ENCODE measurements at regions of chr17 and their contacts with region 1.

Region 1: DNA sequence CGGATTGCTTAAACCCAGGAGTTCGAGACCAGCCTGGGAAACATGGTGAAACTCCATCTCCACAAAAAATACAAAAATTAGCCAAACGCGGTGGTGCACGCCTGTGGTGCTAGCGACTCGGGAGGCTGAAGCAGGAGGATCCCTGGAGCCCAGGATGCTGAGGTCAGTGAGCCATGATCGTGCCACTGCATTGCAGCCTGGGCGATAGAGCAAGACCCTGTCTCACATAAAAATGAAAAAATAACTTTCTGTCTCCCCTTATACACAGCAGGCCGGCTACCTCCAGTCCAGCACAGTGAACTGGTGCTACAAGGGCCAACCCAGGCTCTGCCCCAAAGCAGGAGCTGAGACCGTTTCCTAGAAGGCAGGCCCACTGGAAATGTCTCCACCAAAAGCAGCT is 59.7 kb downstream of the YWHAE start:
- DNase-seq: no peak
- H3K4me3 ChIP-seq: no peak overlapping the region
- H3K27ac ChIP-seq: no peak overlapping the region
- H3K4me1 ChIP-seq: no peaks in the 10 kb centered on the region
- H3K27me3 ChIP-seq: no peaks in the 10 kb centered on the region
- CTCF ChIP-seq: no peak

Region 2: DNA sequence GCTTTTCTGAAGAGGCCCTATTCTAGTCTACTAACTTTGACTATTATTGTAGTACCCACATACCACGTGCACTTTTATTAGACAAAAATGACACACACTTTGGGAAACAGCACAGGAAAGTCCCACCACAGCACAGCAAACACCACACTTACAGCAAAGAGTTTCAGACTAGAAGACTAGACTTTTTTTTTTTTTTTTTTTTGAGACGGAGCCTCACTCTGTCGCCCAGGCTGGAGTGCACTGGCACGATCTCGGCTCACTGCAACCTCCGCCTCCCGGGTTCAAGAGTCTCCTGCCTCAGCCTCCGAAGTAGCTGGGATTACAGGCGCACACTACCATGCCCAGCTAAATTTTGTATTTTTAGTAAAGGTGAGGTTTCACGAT is 39.6 kb after region 1 on chr17:
- CTCF ChIA-PET with region 1: no interaction called
- dilution Hi-C with region 1: loop called (anchors 5 kb)
- in situ Hi-C with region 1: no loop called
- intact Hi-C with region 1: no loop called
- DNase-seq: peak; percentile 43
- H3K4me3 ChIP-seq: no peak overlapping the region
- H3K27ac ChIP-seq: no peak overlapping the region
- H3K4me1 ChIP-seq: peaks cover 6% of the 10 kb centered on the region
- H3K27me3 ChIP-seq: no peaks in the 10 kb centered on the region
- CTCF ChIP-seq: no peak

Region 3: GRCh38 chr17:1438593-1439083 is 98.3 kb after region 1 on chr17:
- CTCF ChIA-PET with region 1: no interaction called
- dilution Hi-C with region 1: loop called (anchors 5 kb)
- in situ Hi-C with region 1: no loop called
- intact Hi-C with region 1: no loop called
- DNase-seq: no peak
- H3K4me3 ChIP-seq: no peak overlapping the region
- H3K27ac ChIP-seq: no peak overlapping the region
- H3K4me1 ChIP-seq: no peaks in the 10 kb centered on the region
- H3K27me3 ChIP-seq: no peaks in the 10 kb centered on the region
- CTCF ChIP-seq: no peak

Region 4: GRCh38 chr17:1474402-1475189 is 134.2 kb after region 1 on chr17:
- CTCF ChIA-PET with region 1: no interaction called
- dilution Hi-C with region 1: no loop called
- in situ Hi-C with region 1: no loop called
- intact Hi-C with region 1: no loop called
- DNase-seq: no peak
- H3K4me3 ChIP-seq: no peak overlapping the region
- H3K27ac ChIP-seq: no peak overlapping the region
- H3K4me1 ChIP-seq: no peaks in the 10 kb centered on the region
- H3K27me3 ChIP-seq: no peaks in the 10 kb centered on the region
- CTCF ChIP-seq: no peak

Region 5: GRCh38 chr17:1484676-1485421 is 144.5 kb after region 1 on chr17:
- CTCF ChIA-PET with region 1: no interaction called
- dilution Hi-C with region 1: no loop called
- in situ Hi-C with region 1: no loop called
- intact Hi-C with region 1: no loop called
- DNase-seq: peak; percentile 32
- H3K4me3 ChIP-seq: peak overlapping the region; percentile 59 to 91 (median 69)
- H3K27ac ChIP-seq: peak overlapping the region; percentile 48
- H3K4me1 ChIP-seq: peaks cover 33% of the 10 kb centered on the region
- H3K27me3 ChIP-seq: no peaks in the 10 kb centered on the region
- CTCF ChIP-seq: no peak